ENCODE measurements at regions of chr9 and their contacts with region 1.

Region 1: GRCh38 chr9:128621730-128622455 is 34.8 kb downstream of the DYNC2I2 start:
- DNase-seq: no peak
- ATAC-seq: no peak
- H3K4me3 ChIP-seq: no peak overlapping the region
- H3K27ac ChIP-seq: no peak overlapping the region
- H3K4me1 ChIP-seq: peaks cover 0 to 3% (median 0%) of the 10 kb centered on the region in 12 donors
- H3K27me3 ChIP-seq: no peaks in the 10 kb centered on the region
- CTCF ChIP-seq: no peak
- POLR2A ChIP-seq: no peak

Region 2: GRCh38 chr9:128580721-128581120 is 41.2 kb before region 1 on chr9:
- intact Hi-C with region 1: loop called in 3 of 10 experiments (anchors 5 kb)
- DNase-seq: no peak
- ATAC-seq: no peak
- H3K4me3 ChIP-seq: no peak overlapping the region
- H3K27ac ChIP-seq: no peak overlapping the region
- H3K4me1 ChIP-seq: peaks cover 0 to 13% (median 3%) of the 10 kb centered on the region in 12 donors
- H3K27me3 ChIP-seq: no peaks in the 10 kb centered on the region
- CTCF ChIP-seq: no peak
- POLR2A ChIP-seq: no peak

Measured in heart left ventricle (tissue), 16 donors.